Dorsolateral prefrontal cortex (tissue), 120 donors: ENCODE measurements at regions of chr9 and their contacts with region 1.

Region 1: GRCh38 chr9:406886-407654 is 192.4 kb downstream of the DOCK8 start:
- DNase-seq: no peak
- H3K4me3 ChIP-seq: no peak overlapping the region
- H3K27ac ChIP-seq: no peak overlapping the region
- H3K27me3 ChIP-seq: peaks cover 0 to 4% (median 0%) of the 10 kb centered on the region in 45 donors
- CTCF ChIP-seq: peak in 42 of 56 donors; percentile 11 to 73 (median 35)

Region 2: DNA sequence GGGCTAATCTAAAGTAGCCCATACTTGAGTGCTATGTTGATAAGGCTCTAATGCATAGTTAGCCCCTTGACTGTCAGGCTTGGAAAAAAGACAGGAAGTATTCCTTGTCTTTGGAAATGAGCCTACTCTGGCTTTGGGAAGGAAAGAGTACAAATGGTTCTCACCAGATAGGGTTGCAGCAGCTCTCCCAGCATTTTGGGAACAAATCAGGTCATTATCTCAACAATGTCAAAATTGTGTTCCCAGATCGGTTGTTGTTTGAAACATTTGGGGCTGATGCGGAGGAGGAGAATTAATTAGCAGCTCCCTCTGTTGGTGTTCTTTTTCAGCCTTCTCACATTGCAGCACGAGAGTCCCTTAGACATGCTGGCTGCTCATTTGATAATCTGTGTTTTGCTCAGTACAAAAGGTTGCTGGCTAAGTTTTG is 139.7 kb after region 1 on chr9:
- intact Hi-C with region 1: loop called in 1 of 2 experiments (anchors 5 kb)
- DNase-seq: peak in 2 of 10 donors; percentile 6 to 54
- H3K4me3 ChIP-seq: peak overlapping the region in 46 of 59 donors; percentile 2 to 62 (median 30)
- H3K27ac ChIP-seq: peak overlapping the region; percentile 14 to 93 (median 77)
- H3K27me3 ChIP-seq: no peaks in the 10 kb centered on the region
- CTCF ChIP-seq: peak in 55 of 56 donors; percentile 22 to 79 (median 60)

Region 3: DNA sequence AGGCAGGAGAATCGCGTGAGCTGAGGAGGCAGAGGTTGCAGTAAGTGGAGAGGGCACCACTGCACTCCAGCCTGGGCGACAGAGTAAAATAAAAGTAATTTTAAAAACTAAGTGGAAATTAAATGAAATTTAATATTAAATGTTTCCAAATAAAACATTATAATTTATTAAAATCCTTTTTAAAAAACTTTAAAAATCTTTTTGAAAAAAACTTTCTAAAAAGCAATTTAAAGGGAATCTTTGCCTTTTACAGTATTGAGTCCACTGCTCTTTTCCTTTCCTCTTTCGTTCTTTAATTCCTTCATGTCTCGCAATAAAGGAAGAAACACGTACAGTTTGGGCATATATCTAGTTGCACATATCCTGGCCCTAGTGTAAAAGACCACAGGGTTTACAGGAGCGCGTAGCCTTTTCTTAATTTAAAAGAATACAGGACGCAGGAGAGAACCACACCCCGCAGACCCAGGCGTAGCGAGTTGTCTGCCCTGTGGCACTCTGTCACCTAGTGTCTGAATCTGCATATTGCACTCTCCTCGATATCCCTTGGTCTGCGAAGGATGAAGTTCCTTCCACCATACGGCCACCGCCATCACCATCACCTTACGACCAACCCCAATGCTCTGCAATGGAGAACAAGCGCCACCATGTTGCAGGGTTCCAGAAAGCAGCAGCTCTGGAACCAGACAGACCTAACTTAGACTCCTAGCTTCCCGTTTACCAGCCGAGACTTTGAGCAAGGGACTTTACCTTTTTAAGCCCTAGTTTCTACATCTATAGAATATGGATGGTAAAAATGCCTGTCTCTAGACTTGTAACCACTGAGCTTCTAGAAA is 356.8 kb after region 1 on chr9:
- intact Hi-C with region 1: loop called in 1 of 2 experiments (anchors 10 kb)
- DNase-seq: peak in 7 of 10 donors; percentile 43 to 76 (median 50)
- H3K4me3 ChIP-seq: peak overlapping the region in 19 of 59 donors; percentile 4 to 45 (median 17)
- H3K27ac ChIP-seq: no peak overlapping the region
- H3K27me3 ChIP-seq: peaks cover 0 to 10% (median 0%) of the 10 kb centered on the region in 45 donors
- CTCF ChIP-seq: peak in 55 of 56 donors; percentile 36 to 93 (median 79)

Region 4: GRCh38 chr9:806285-807156 is 399.5 kb after region 1 on chr9:
- intact Hi-C with region 1: loop called in 1 of 2 experiments (anchors 10 kb)
- DNase-seq: no peak
- H3K4me3 ChIP-seq: no peak overlapping the region
- H3K27ac ChIP-seq: no peak overlapping the region
- H3K27me3 ChIP-seq: no peaks in the 10 kb centered on the region
- CTCF ChIP-seq: peak; percentile 46 to 90 (median 80)